Sigmoid colon (tissue), 7 donors: ENCODE measurements at regions of chr11 and their contacts with region 1.

Region 1: DNA sequence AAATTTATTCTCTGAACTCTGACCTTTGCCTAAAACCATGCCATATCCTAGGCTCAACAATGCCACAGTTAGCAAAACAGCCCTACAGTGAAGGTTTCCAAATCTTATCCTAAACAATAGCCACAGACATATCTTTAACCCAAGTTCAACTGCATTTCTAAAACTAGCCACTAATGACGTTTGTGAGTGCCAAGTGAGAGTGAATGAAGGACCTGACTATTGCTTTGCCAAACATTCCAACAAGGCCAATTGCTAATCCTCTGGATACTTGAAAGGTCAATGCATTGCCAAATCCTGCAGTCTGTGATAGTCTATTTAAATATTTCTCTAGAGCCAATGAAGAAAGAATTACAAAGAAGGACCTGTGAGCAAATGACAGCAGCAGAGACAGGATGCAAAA is 2.5 kb upstream of the OR4C45 start:
- DNase-seq: no peak
- H3K4me3 ChIP-seq: no peak overlapping the region
- H3K27ac ChIP-seq: no peak overlapping the region
- H3K4me1 ChIP-seq: no peaks in the 10 kb centered on the region
- H3K27me3 ChIP-seq: no peaks in the 10 kb centered on the region
- CTCF ChIP-seq: no peak
- EP300 ChIP-seq: no peak
- POLR2A ChIP-seq: no peak

Region 2: GRCh38 chr11:48354677-48355076 is 1675.5 kb before region 1 on chr11:
- intact Hi-C with region 1: loop called (anchors 5 kb)
- DNase-seq: no peak
- H3K4me3 ChIP-seq: no peak overlapping the region
- H3K27ac ChIP-seq: no peak overlapping the region
- H3K4me1 ChIP-seq: no peaks in the 10 kb centered on the region
- H3K27me3 ChIP-seq: no peaks in the 10 kb centered on the region
- CTCF ChIP-seq: no peak
- EP300 ChIP-seq: no peak
- POLR2A ChIP-seq: no peak

Region 3: DNA sequence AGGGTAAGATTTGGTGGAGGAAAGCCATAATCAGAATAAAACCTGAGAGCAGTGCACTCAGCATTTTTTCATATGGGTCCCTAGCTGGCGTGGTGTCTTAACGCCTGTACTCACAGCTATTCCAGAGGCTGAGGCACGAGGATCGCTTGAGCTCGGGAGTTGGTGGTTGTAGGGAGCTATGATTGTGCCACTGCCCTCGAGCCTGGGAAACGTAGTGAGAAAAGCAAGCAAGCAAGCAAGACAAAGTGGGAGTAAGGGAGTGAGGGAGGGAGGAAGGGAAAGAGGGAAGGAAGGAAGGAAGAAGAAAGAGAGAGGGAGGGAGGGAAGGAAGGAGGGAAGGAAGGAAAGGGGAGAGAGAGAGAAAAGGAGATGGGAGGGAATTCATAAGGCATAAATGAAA is 245.0 kb after region 1 on chr11:
- intact Hi-C with region 1: no loop called
- DNase-seq: no peak
- H3K4me3 ChIP-seq: no peak overlapping the region
- H3K27ac ChIP-seq: no peak overlapping the region
- H3K4me1 ChIP-seq: no peaks in the 10 kb centered on the region
- H3K27me3 ChIP-seq: no peaks in the 10 kb centered on the region
- CTCF ChIP-seq: no peak
- EP300 ChIP-seq: no peak
- POLR2A ChIP-seq: no peak